GM13977 (cell line): ENCODE measurements at regions of chr7 and their contacts with region 1.

Region 1: GRCh38 chr7:92833024-92833765 is 3.2 kb downstream of the CDK6 start:
- DNase-seq: peak; percentile 79
- CTCF ChIP-seq: peak; percentile 96

Region 2: DNA sequence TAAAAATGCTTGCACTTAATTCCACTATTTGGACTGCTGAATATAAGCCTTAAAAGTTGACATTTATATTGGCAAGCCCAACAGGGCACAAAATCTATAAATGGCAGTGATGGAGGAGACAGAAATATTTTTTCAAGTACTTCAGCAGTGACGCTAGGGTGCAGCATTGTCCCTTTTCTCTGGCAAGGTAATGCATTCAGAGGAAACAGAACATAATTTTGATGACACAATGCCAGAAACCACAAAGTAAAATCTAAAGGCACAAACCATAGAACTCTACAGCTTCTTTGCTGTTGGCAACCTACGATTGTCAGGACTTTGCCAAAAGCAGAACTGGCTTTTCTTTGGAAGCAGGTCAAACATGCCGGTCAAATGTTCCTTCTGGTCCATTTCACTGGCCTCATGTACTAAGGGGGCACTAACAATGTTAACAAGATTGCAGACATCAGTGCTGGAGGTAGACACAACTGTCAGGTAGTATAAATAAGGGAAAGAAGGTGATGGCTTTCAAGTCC is 212.1 kb before region 1 on chr7:
- in situ Hi-C with region 1: loop called (anchors 10 kb)
- DNase-seq: peak; percentile 44
- CTCF ChIP-seq: peak; percentile 81

Region 3: GRCh38 chr7:92691578-92691977 is 141.6 kb before region 1 on chr7:
- in situ Hi-C with region 1: loop called (anchors 5 kb)
- DNase-seq: peak; percentile 35
- CTCF ChIP-seq: peak; percentile 64